ENCODE measurements at regions of chr7 and their contacts with region 1.

Region 1: DNA sequence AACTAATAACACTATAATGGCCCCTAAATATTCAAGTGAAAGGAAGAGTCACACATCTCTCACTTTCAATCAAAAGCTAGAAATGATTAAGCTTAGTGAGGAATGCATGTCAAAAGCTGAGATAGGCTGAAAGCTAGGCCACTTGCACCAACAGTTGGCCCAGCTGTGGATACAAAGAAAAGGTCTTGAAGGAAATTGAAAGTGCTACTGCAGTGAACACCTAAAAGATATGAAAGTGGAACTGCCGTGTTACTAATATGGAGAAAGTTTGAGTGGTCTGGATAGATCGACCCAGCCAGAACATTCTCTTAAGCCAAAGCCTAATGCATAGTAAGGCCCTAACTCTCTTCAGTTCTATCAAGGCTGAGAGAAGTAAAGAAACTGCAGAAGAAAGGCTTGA is 12.1 kb upstream of the SNX13 start:
- DNase-seq: no peak
- ATAC-seq: no peak
- H3K4me3 ChIP-seq: no peak overlapping the region
- H3K27ac ChIP-seq: no peak overlapping the region
- H3K4me1 ChIP-seq: peaks cover 0 to 9% (median 0%) of the 10 kb centered on the region in 9 donors
- H3K27me3 ChIP-seq: no peaks in the 10 kb centered on the region
- CTCF ChIP-seq: no peak

Region 2: GRCh38 chr7:17971411-17971810 is 19.0 kb after region 1 on chr7:
- intact Hi-C with region 1: loop called in 1 of 10 experiments (anchors 1 kb)
- DNase-seq: no peak
- ATAC-seq: no peak
- H3K4me3 ChIP-seq: no peak overlapping the region
- H3K27ac ChIP-seq: no peak overlapping the region
- H3K4me1 ChIP-seq: no peaks in the 10 kb centered on the region
- H3K27me3 ChIP-seq: no peaks in the 10 kb centered on the region
- CTCF ChIP-seq: peak in 6 of 9 donors; percentile 22 to 48 (median 39)

Region 3: GRCh38 chr7:17991866-17992648 is 39.7 kb after region 1 on chr7:
- intact Hi-C with region 1: no loop called
- DNase-seq: no peak
- ATAC-seq: no peak
- H3K4me3 ChIP-seq: no peak overlapping the region
- H3K27ac ChIP-seq: no peak overlapping the region
- H3K4me1 ChIP-seq: peaks cover 0 to 5% (median 3%) of the 10 kb centered on the region in 9 donors
- H3K27me3 ChIP-seq: no peaks in the 10 kb centered on the region
- CTCF ChIP-seq: peak in 4 of 9 donors; percentile 14 to 29 (median 26)

Region 4: GRCh38 chr7:18064242-18064838 is 112.0 kb after region 1 on chr7:
- intact Hi-C with region 1: no loop called
- DNase-seq: no peak
- ATAC-seq: peak in 1 of 8 donors; percentile 48
- H3K4me3 ChIP-seq: no peak overlapping the region
- H3K27ac ChIP-seq: no peak overlapping the region
- H3K4me1 ChIP-seq: no peaks in the 10 kb centered on the region
- H3K27me3 ChIP-seq: no peaks in the 10 kb centered on the region
- CTCF ChIP-seq: peak; percentile 35 to 68 (median 60)

Measured in heart right ventricle (tissue), 16 donors.